ENCODE measurements at regions of chr3 and their contacts with region 1.

Region 1: DNA sequence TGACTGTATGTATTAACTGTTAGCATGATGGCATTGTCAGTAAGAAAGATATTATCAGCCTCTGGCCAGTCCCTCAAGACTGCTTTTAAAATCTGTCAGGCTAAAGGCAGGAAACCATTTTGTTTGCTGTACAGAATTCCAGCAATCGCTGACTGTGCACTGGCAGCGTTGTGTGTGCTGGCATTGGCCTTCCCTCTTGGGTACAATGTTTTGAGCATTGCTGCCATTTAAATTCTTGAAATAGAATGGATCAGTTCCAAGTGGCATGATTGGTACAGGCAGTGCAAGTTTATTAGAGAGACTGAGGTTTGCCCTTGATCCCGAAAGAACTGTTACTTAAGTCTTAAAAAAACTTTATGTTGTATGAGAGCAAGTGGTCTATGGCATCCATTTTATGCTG is 788.7 kb downstream of the OTOL1 start:
- DNase-seq: no peak
- ATAC-seq: no peak
- H3K4me3 ChIP-seq: no peak overlapping the region
- H3K27ac ChIP-seq: no peak overlapping the region
- H3K4me1 ChIP-seq: peaks cover 16% of the 10 kb centered on the region
- H3K27me3 ChIP-seq: no peaks in the 10 kb centered on the region
- CTCF ChIP-seq: no peak

Region 2: DNA sequence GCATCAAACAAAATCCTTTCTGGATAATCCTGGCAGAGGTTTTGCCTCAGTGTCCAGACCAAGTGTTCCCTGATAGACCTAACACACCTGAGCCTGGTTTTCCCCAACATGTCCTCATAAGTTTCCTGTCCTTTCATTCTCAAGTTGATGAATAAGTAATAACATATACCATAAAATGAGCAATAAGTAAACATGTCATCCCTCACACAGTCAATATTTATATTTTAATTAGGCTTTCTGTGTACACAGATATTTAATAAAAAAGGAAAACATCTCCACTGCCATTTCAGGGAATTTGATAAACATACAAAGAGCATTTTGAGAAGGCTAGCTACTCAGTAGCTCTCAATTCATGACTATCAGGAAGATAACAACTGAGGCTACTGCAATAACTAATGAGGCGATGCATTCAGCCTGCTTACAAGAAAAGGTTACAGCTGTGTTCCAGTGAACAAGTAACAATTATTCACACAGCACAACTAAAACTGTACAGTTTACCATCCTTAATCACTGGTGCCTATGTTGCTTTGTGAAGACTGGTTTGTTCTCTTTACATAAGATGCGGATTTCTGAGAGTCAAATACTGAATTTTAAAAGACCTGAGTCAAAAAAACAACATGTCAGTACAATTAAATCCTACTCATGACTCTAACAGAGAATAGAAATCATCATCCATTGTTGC is 262.5 kb before region 1 on chr3:
- CTCF ChIA-PET with region 1: no interaction called
- POLR2A ChIA-PET with region 1: no interaction called
- intact Hi-C with region 1: loop called (anchors 2 kb)
- DNase-seq: peak; percentile 43
- ATAC-seq: peak; percentile 76
- H3K4me3 ChIP-seq: no peak overlapping the region
- H3K27ac ChIP-seq: peak overlapping the region; percentile 38
- H3K4me1 ChIP-seq: peaks cover 27% of the 10 kb centered on the region
- H3K27me3 ChIP-seq: no peaks in the 10 kb centered on the region
- CTCF ChIP-seq: no peak

Region 3: GRCh38 chr3:162262147-162262546 is 23.1 kb before region 1 on chr3:
- CTCF ChIA-PET with region 1: no interaction called
- POLR2A ChIA-PET with region 1: no interaction called
- intact Hi-C with region 1: no loop called
- DNase-seq: peak; percentile 65
- ATAC-seq: peak; percentile 87
- H3K4me3 ChIP-seq: no peak overlapping the region
- H3K27ac ChIP-seq: peak overlapping the region; percentile 21; the same call in 1 of the 2 replicates
- H3K4me1 ChIP-seq: peaks cover 11% of the 10 kb centered on the region
- H3K27me3 ChIP-seq: no peaks in the 10 kb centered on the region
- CTCF ChIP-seq: no peak

Region 4: DNA sequence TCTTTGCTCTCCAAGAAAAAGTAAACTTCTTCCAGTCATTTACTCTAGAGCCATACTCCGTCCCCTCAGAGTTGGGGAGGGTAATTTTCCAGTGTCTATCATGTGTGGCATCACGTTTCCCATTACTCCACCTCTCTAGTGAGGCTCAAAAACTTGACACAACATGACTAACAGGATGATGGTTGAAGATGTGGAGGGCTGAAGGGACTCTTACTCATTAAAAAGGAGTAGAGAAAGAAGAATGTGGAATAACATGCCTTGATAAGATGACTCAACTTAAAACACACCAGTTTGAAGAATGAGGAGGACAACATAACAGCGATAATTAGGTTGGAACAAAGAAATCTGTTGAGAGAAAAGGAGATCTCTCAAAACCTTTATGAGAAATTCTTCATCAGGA is 105.6 kb after region 1 on chr3:
- CTCF ChIA-PET with region 1: no interaction called
- POLR2A ChIA-PET with region 1: no interaction called
- intact Hi-C with region 1: loop called (anchors 2 kb)
- DNase-seq: peak; percentile 94
- ATAC-seq: peak; percentile 94
- H3K4me3 ChIP-seq: peak overlapping the region; percentile 45
- H3K27ac ChIP-seq: peak overlapping the region; percentile 95
- H3K4me1 ChIP-seq: peaks cover 25% of the 10 kb centered on the region
- H3K27me3 ChIP-seq: no peaks in the 10 kb centered on the region
- CTCF ChIP-seq: no peak

Region 5: DNA sequence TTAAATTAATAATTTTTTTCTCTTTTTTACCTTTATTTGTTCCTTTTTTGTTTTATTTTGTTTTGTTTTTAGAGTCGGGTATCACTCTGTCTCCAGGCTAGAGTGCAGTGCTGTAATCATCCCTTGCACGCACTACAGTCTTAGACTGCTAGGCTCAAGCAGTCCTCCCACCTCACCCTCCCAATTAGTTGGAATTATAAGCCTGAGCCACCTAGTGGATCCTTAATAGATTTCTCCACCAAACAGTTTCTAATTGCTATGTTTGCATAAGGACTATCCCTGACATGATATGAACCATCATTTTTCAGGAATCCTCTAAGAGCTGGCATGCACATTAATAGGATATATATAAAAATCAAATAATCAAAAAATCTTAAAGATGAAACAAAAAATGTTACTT is 204.6 kb after region 1 on chr3:
- CTCF ChIA-PET with region 1: no interaction called
- POLR2A ChIA-PET with region 1: no interaction called
- intact Hi-C with region 1: loop called (anchors 5 kb)
- DNase-seq: peak; percentile 53
- ATAC-seq: peak; percentile 60
- H3K4me3 ChIP-seq: no peak overlapping the region
- H3K27ac ChIP-seq: no peak overlapping the region
- H3K4me1 ChIP-seq: peaks cover 21% of the 10 kb centered on the region
- H3K27me3 ChIP-seq: no peaks in the 10 kb centered on the region
- CTCF ChIP-seq: peak; percentile 57

Region 6: GRCh38 chr3:162517110-162517509 is 231.9 kb after region 1 on chr3:
- CTCF ChIA-PET with region 1: no interaction called
- POLR2A ChIA-PET with region 1: no interaction called
- intact Hi-C with region 1: loop called (anchors 5 kb)
- DNase-seq: peak; percentile 14
- ATAC-seq: no peak
- H3K4me3 ChIP-seq: no peak overlapping the region
- H3K27ac ChIP-seq: no peak overlapping the region
- H3K4me1 ChIP-seq: no peaks in the 10 kb centered on the region
- H3K27me3 ChIP-seq: no peaks in the 10 kb centered on the region
- CTCF ChIP-seq: peak; percentile 28; the same call in 1 of the 2 replicates

Region 7: GRCh38 chr3:162799910-162800309 is 514.7 kb after region 1 on chr3:
- CTCF ChIA-PET with region 1: no interaction called
- POLR2A ChIA-PET with region 1: no interaction called
- intact Hi-C with region 1: loop called (anchors 10 kb)
- DNase-seq: peak; percentile 10
- ATAC-seq: no peak
- H3K4me3 ChIP-seq: no peak overlapping the region
- H3K27ac ChIP-seq: no peak overlapping the region
- H3K4me1 ChIP-seq: no peaks in the 10 kb centered on the region
- H3K27me3 ChIP-seq: no peaks in the 10 kb centered on the region
- CTCF ChIP-seq: peak; percentile 56

Region 8: GRCh38 chr3:163043074-163043473 is 757.8 kb after region 1 on chr3:
- CTCF ChIA-PET with region 1: no interaction called
- POLR2A ChIA-PET with region 1: no interaction called
- intact Hi-C with region 1: loop called (anchors 1 kb)
- DNase-seq: peak; percentile 62
- ATAC-seq: peak; percentile 76
- H3K4me3 ChIP-seq: no peak overlapping the region
- H3K27ac ChIP-seq: no peak overlapping the region
- H3K4me1 ChIP-seq: no peaks in the 10 kb centered on the region
- H3K27me3 ChIP-seq: no peaks in the 10 kb centered on the region
- CTCF ChIP-seq: peak; percentile 81

Measured in PC-3 (cell line).